Caco-2 (cell line): ENCODE measurements at regions of chr10 and their contacts with region 1.

Region 1: DNA sequence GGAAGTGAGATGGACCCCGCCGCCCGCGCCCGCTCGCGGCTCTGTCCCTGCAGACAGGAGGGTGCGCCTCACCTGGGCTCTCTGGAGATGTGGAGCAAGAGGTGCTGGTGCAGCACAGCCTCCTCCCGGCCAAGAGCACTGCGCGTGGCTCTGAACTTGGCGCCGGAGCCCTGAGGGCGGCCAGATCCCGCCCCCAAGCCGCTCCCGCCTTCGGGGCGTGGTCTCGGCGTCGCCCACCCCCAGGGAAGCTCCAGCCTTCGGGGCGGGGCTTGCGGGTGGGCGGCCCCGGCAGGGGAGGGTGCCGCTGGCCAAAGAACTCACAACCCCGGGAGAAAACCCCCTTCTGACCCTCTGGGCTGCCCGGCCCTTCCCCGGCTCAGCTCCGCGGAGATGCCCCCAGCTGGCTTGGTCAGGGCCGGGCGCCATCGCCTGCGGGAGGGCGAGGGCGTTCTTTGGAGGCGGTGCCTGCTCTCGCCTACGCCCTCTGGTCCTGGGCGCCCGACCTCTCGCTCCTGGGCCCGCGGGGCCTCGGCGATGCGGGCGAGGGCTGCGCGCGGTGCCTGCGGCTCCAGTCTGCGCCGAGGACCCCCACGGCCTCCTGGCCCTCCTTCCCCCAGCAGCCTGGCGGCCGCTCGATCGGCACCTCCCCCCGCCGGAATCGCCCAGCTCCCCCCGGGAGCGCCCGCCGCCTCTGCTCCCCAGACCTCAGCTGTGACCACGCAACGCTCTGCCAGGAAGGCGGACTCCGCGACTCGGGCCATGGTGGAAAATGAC is at the start of gene ZNF488:
- DNase-seq: peak; percentile 91 to 96
- H3K4me3 ChIP-seq: peak within 1 kb of the TSS; percentile 77
- H3K4me3 Mint-ChIP-seq: peak within 1 kb of the TSS; percentile 80
- H3K27ac Mint-ChIP-seq: peak within 1 kb of the TSS; percentile 54
- H3K4me1 ChIP-seq: peaks cover 41% of the 10 kb centered on the region
- H3K4me1 Mint-ChIP-seq: peaks cover 41% of the 10 kb centered on the region
- H3K27me3 ChIP-seq: no peaks in the 10 kb centered on the region
- H3K27me3 Mint-ChIP-seq: peaks cover 8% of the 10 kb centered on the region
- CTCF ChIP-seq: no peak
- total RNA-seq, gene ZNF488: 5.6 and 8.7 TPM in 2 replicates

Region 2: DNA sequence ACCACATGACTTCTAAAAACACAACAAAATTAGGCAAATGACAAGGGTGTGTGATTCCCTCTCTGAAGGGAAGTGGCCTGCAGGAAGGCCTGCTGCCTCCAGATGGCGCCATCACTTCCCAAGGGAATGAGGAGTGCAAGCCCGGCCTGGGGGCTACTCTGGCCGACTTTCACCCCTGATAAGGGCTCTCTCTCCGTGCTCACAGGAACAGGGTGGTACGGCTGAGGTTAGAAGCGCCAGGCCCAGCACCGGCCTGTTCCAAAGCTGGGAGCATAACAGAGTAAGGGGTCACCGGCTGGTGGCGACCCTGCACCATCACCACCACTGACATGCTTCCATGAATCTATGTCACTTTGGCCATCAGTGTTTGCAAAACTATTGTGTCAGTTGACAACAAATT is 23.0 kb before region 1 on chr10:
- CTCF ChIA-PET with region 1: interaction called, 13 read pairs
- POLR2A ChIA-PET with region 1: no interaction called
- intact Hi-C with region 1: no loop called
- DNase-seq: peak; percentile 72 to 77
- H3K4me3 ChIP-seq: no peak overlapping the region
- H3K4me3 Mint-ChIP-seq: no peak overlapping the region
- H3K27ac Mint-ChIP-seq: no peak overlapping the region
- H3K4me1 ChIP-seq: peaks cover 13% of the 10 kb centered on the region
- H3K4me1 Mint-ChIP-seq: no peaks in the 10 kb centered on the region
- H3K27me3 ChIP-seq: no peaks in the 10 kb centered on the region
- H3K27me3 Mint-ChIP-seq: no peaks in the 10 kb centered on the region
- CTCF ChIP-seq: peak; percentile 91 to 93

Region 3: DNA sequence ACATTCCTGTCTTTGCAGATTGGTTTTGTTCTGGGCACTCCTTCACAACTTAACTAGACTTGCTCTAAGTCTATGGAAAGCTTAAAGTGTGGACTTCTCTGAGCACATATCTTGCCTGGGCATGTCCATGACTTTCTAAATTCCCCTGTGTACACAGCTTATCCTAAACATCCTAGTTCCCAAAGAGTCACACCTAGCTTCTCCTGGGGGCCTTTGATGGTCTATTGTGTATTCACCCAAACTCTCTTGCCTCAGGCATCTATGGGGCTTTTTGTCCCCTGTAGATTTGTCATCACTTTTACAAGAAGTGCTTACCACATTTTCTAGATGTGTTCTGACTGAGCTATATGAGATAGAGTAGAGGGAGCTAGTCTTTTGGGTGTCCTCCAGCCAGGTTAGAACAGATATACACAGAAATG is 12.0 kb after region 1 on chr10:
- CTCF ChIA-PET with region 1: interaction called, 9 read pairs
- POLR2A ChIA-PET with region 1: interaction called, 10 read pairs
- intact Hi-C with region 1: loop called (anchors 1 kb)
- DNase-seq: peak; percentile 54 to 72
- H3K4me3 ChIP-seq: no peak overlapping the region
- H3K4me3 Mint-ChIP-seq: no peak overlapping the region
- H3K27ac Mint-ChIP-seq: peak overlapping the region; percentile 8
- H3K4me1 ChIP-seq: peaks cover 33% of the 10 kb centered on the region
- H3K4me1 Mint-ChIP-seq: peaks cover 33% of the 10 kb centered on the region
- H3K27me3 ChIP-seq: no peaks in the 10 kb centered on the region
- H3K27me3 Mint-ChIP-seq: no peaks in the 10 kb centered on the region
- CTCF ChIP-seq: no peak

Region 4: GRCh38 chr10:47402641-47403301 is 18.4 kb after region 1 on chr10:
- CTCF ChIA-PET with region 1: interaction called, 8 read pairs
- POLR2A ChIA-PET with region 1: interaction called, 6 read pairs
- intact Hi-C with region 1: loop called (anchors 2 kb)
- DNase-seq: peak; percentile 78 to 91
- H3K4me3 ChIP-seq: no peak overlapping the region
- H3K4me3 Mint-ChIP-seq: peak overlapping the region; percentile 32
- H3K27ac Mint-ChIP-seq: peak overlapping the region; percentile 66
- H3K4me1 ChIP-seq: peaks cover 70% of the 10 kb centered on the region
- H3K4me1 Mint-ChIP-seq: peaks cover 44% of the 10 kb centered on the region
- H3K27me3 ChIP-seq: no peaks in the 10 kb centered on the region
- H3K27me3 Mint-ChIP-seq: no peaks in the 10 kb centered on the region
- CTCF ChIP-seq: no peak